ENCODE measurements at regions of chr1 and their contacts with region 1.

Region 1: GRCh38 chr1:23772049-23772853 is 6.0 kb upstream of the PITHD1 start:
- DNase-seq: peak; percentile 95
- H3K4me3 Mint-ChIP-seq: no peak overlapping the region
- H3K27ac Mint-ChIP-seq: no peak overlapping the region
- H3K4me1 Mint-ChIP-seq: peaks cover 31% of the 10 kb centered on the region
- H3K27me3 Mint-ChIP-seq: no peaks in the 10 kb centered on the region

Region 2: GRCh38 chr1:23752909-23753308 is 19.3 kb before region 1 on chr1:
- CTCF ChIA-PET with region 1: interaction called, 11 read pairs
- intact Hi-C with region 1: no loop called
- DNase-seq: no peak
- H3K4me3 Mint-ChIP-seq: no peak overlapping the region
- H3K27ac Mint-ChIP-seq: no peak overlapping the region
- H3K4me1 Mint-ChIP-seq: peaks cover 13% of the 10 kb centered on the region
- H3K27me3 Mint-ChIP-seq: no peaks in the 10 kb centered on the region

Region 3: GRCh38 chr1:23790696-23791515 is 18.7 kb after region 1 on chr1 and contains the start of gene LYPLA2:
- CTCF ChIA-PET with region 1: interaction called, 10 read pairs
- intact Hi-C with region 1: no loop called
- DNase-seq: peak; percentile 93
- H3K4me3 Mint-ChIP-seq: peak within 1 kb of the TSS; percentile 88
- H3K27ac Mint-ChIP-seq: peak within 1 kb of the TSS; percentile 89
- H3K4me1 Mint-ChIP-seq: peaks cover 25% of the 10 kb centered on the region
- H3K27me3 Mint-ChIP-seq: no peaks in the 10 kb centered on the region
- total RNA-seq, gene LYPLA2: 48.1 to 49.7 TPM

Region 4: DNA sequence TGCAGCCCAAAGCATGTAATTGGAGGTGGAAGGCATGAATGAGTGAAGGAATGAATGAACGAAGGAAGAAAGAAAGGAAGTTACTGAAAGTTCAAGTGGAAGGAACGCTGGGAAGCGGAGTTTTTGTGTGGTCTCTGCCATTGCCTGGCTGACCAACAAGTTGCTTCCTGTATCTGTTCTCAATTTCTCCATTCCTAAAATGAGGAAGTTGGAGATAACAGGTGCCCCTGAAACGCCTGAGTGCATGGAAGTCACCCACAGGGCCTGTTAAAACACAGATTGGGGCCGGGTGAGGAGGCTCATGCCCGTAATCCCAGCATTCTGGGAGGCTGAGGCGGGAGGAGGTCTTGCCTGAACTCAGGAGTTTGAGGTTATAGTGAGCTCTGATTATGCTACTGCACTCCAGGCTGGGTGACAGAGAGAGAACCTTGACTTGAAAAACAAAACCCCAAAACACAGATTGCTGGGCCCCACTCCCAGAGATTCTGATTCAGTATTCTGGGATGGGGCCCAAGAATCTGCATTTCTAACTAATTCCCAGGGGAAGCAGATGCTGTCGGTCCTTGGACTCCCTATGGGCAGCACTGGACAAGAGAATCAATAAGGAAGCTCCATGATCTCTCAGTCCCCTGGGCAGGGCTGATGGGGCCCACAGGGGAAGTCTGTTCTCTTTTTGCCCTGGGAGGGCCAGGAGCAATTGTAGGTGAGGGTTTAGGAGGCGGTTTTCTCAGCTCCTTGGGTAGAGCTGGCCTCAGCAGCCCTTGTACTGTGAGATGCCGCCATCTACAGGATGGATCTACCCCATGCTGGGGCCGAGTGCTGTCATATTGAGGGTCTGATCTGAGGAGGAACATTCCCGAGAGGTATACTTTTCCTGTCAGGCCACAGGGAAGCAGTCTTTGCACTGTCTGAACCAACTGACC is 144.2 kb after region 1 on chr1:
- CTCF ChIA-PET with region 1: interaction called, 16 read pairs
- intact Hi-C with region 1: loop called (anchors 1 kb)
- DNase-seq: peak; percentile 76
- H3K4me3 Mint-ChIP-seq: no peak overlapping the region
- H3K27ac Mint-ChIP-seq: no peak overlapping the region
- H3K4me1 Mint-ChIP-seq: peaks cover 19% of the 10 kb centered on the region
- H3K27me3 Mint-ChIP-seq: no peaks in the 10 kb centered on the region

Measured in activated naive CD4-positive, alpha-beta T cell treated with anti-CD3 and anti-CD28 coated beads for 36 hours (primary cell).